ENCODE measurements at regions of chr6 and their contacts with region 1.

Region 1: GRCh38 chr6:152642989-152643388 is 5.8 kb upstream of the SYNE1 start:
- DNase-seq: peak in 3 of 4 donors; percentile 54 to 84 (median 67)
- ATAC-seq: peak; percentile 100
- H3K4me3 ChIP-seq: no peak overlapping the region
- H3K27ac ChIP-seq: no peak overlapping the region
- H3K4me1 ChIP-seq: no peaks in the 10 kb centered on the region
- H3K27me3 ChIP-seq: peaks cover 0 to 2% of the 10 kb centered on the region in 2 donors
- CTCF ChIP-seq: peak; percentile 50 to 59

Region 2: GRCh38 chr6:152110886-152111820 is 531.8 kb before region 1 on chr6:
- intact Hi-C with region 1: no loop called
- DNase-seq: peak in 1 of 4 donors; percentile 68
- ATAC-seq: peak; percentile 32
- H3K4me3 ChIP-seq: no peak overlapping the region
- H3K27ac ChIP-seq: peak overlapping the region in 1 of 2 donors; percentile 33
- H3K4me1 ChIP-seq: peaks cover 0 to 20% of the 10 kb centered on the region in 2 donors
- H3K27me3 ChIP-seq: no peaks in the 10 kb centered on the region
- CTCF ChIP-seq: no peak

Region 3: GRCh38 chr6:152552616-152553209 is 90.3 kb before region 1 on chr6:
- intact Hi-C with region 1: loop called in 1 of 2 experiments (anchors 5 kb)
- DNase-seq: peak; percentile 38 to 78 (median 70)
- ATAC-seq: peak; percentile 99
- H3K4me3 ChIP-seq: no peak overlapping the region
- H3K27ac ChIP-seq: no peak overlapping the region
- H3K4me1 ChIP-seq: peaks cover 0 to 6% of the 10 kb centered on the region in 2 donors
- H3K27me3 ChIP-seq: no peaks in the 10 kb centered on the region
- CTCF ChIP-seq: peak; percentile 86 to 88

Region 4: GRCh38 chr6:152769159-152769558 is 126.2 kb after region 1 on chr6:
- intact Hi-C with region 1: no loop called
- DNase-seq: no peak
- ATAC-seq: no peak
- H3K4me3 ChIP-seq: no peak overlapping the region
- H3K27ac ChIP-seq: no peak overlapping the region
- H3K4me1 ChIP-seq: no peaks in the 10 kb centered on the region
- H3K27me3 ChIP-seq: no peaks in the 10 kb centered on the region
- CTCF ChIP-seq: no peak

Measured in left lung (tissue), 14 donors.